ENCODE measurements at regions of chr2 and their contacts with region 1.

Region 1: GRCh38 chr2:232310121-232310520 is 68.4 kb upstream of the ALPP start:
- DNase-seq: peak; percentile 53
- H3K4me3 Mint-ChIP-seq: no peak overlapping the region
- H3K27ac Mint-ChIP-seq: peak overlapping the region; percentile 83
- H3K4me1 Mint-ChIP-seq: peaks cover 53% of the 10 kb centered on the region
- H3K27me3 Mint-ChIP-seq: no peaks in the 10 kb centered on the region

Region 2: GRCh38 chr2:232292395-232293154 is 17.5 kb before region 1 on chr2:
- CTCF ChIA-PET with region 1: interaction called, 30 read pairs
- POLR2A ChIA-PET with region 1: interaction called, 8 read pairs
- DNase-seq: peak; percentile 76
- H3K4me3 Mint-ChIP-seq: no peak overlapping the region
- H3K27ac Mint-ChIP-seq: no peak overlapping the region
- H3K4me1 Mint-ChIP-seq: peaks cover 3% of the 10 kb centered on the region
- H3K27me3 Mint-ChIP-seq: no peaks in the 10 kb centered on the region

Region 3: DNA sequence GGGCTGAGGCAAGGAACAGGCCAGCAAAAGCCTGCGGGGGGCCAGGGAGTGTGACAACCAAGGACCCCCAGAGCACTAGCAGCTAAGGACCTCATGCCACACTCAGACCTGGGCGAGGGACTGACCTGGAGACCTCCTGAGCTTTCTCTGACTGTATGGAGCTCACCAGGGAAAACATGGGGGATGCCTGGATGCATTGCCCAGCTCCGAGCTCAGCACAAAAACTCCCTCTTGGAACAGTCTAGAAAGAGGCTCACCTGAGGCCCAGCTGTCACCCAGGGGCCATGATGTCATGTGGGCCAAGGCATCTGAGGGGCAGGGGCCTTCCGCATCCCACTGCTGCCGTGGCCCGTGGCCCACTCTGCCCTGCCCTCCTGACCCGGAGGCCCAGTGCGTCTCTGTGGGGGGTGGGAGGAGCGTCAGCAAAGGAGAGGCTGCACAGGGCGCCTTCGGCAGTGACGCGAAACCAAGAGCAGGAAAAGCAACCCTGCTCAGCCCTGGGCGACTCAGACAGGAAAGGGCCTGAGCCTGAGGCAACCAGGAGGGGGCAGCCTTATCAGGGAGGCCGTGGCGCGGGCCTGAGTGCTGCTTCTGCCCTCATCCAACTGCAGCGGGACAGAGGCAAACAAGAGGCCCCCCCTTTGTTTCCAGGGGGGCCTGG is 11.2 kb after region 1 on chr2:
- CTCF ChIA-PET with region 1: interaction called, 27 read pairs
- POLR2A ChIA-PET with region 1: interaction called, 13 read pairs
- DNase-seq: peak; percentile 71
- H3K4me3 Mint-ChIP-seq: peak overlapping the region; percentile 32
- H3K27ac Mint-ChIP-seq: peak overlapping the region; percentile 44
- H3K4me1 Mint-ChIP-seq: peaks cover 57% of the 10 kb centered on the region
- H3K27me3 Mint-ChIP-seq: no peaks in the 10 kb centered on the region